ENCODE measurements at regions of chr9 and their contacts with region 1.

Region 1: DNA sequence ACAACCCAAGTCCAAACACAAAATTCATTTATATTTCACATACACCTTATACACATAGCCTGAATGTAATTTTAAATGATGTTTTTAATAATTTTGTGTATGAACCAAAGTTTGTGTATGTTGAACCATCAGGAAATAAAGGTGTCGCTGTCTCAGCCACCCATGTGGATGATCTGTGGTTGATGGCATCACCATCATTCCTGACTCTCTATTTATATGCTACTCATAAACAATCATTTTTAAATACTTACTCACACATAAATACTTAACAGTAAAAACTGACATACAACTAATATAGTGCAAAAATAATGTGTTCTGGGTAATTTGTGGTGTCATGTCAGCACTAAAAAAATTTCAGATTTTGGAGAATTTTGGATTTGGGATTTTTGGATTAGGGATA is 38.4 kb downstream of the SMC5 start:
- DNase-seq: no peak
- ATAC-seq: no peak
- H3K4me3 ChIP-seq: no peak overlapping the region
- H3K27ac ChIP-seq: no peak overlapping the region
- H3K4me1 ChIP-seq: no peaks in the 10 kb centered on the region
- H3K27me3 ChIP-seq: no peaks in the 10 kb centered on the region
- CTCF ChIP-seq: no peak
- EP300 ChIP-seq: no peak
- POLR2A ChIP-seq: no peak
- RAD21 ChIP-seq: no peak

Region 2: DNA sequence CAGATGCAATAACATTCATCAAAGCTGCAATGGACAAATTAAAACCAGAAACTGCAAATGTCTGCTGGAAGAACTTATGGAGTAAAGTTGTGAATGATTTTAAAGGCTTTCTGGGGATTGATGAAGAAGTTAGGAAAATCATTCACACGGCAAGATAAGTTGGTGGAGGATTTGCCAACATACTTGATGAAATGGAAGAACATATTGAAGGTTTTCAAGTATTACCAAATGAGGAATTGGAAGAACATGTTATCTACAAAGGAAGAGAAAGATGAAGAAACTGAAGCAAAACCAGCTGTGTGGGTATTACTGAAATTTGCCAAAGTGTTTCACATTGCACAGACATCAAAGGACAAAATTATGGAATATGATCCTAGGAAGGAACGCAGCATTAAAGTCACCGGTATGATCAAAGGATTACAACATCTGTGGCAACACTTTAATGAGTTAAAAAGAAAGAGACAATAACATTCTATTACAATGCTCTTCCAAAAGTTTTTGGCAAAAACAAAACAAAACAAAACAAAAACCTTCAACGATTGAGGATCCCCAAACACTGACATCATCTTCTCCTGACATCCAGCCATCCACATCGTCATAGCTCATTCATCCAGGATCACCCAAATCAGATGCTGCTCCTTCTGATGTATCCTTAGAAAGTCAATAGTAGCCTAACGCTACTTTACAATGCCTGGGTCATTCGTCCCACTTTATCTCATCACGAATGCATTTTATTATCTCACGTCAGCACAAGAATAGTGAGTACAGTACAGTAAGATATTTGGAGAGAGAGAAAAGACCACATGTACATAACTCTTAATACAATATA is 99.7 kb before region 1 on chr9:
- CTCF ChIA-PET with region 1: no interaction called
- POLR2A ChIA-PET with region 1: no interaction called
- RAD21 ChIA-PET with region 1: no interaction called
- SMC1A ChIA-PET with region 1: no interaction called
- in situ Hi-C with region 1: no loop called
- intact Hi-C with region 1: no loop called
- DNase-seq: no peak
- ATAC-seq: no peak
- H3K4me3 ChIP-seq: no peak overlapping the region
- H3K27ac ChIP-seq: no peak overlapping the region
- H3K4me1 ChIP-seq: no peaks in the 10 kb centered on the region
- H3K27me3 ChIP-seq: no peaks in the 10 kb centered on the region
- CTCF ChIP-seq: no peak
- EP300 ChIP-seq: no peak
- POLR2A ChIP-seq: no peak
- RAD21 ChIP-seq: no peak

Region 3: DNA sequence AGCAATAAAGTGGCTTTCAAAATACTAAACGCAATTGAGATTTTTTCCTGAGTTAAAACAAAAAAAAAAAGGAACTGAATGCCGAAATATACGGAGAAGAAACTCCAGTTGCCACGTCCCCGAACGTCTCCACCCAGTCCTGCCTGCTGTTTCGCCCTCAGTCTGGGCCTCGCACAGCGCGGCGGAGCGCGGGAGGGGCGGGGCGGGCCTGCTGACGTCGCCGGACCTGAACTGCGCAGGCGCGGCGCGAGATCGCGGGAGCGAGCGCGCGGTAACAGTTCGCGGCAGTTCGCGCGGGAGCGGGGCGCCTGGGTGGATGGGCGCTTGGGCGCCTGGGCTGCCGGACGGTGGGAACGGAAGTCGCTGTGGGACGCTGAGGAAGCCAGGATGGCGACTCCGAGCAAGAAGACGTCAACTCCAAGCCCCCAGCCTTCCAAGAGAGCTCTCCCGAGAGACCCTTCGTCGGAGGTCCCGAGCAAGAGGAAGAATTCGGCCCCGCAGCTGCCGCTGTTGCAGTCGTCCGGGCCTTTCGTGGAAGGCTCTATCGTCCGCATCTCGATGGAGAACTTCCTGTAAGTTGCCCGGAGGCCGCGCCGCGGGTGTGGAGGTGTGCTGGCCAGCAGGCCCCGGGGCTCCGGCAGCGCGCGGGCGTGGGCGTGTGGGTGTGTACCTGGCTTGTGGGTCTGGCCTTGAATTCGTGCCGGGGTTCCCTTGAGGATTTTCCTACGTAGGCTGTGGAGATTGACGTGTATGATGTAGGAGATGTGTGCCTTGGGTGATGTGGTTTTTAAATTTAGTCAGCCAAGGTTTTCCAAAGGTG is 38.2 kb before region 1 on chr9 and contains the start of gene SMC5:
- CTCF ChIA-PET with region 1: no interaction called
- POLR2A ChIA-PET with region 1: no interaction called
- RAD21 ChIA-PET with region 1: no interaction called
- SMC1A ChIA-PET with region 1: no interaction called
- in situ Hi-C with region 1: no loop called
- intact Hi-C with region 1: loop called (anchors 5 kb)
- DNase-seq: peak; percentile 80
- ATAC-seq: peak; percentile 84
- H3K4me3 ChIP-seq: peak within 1 kb of the TSS; percentile 85
- H3K27ac ChIP-seq: peak within 1 kb of the TSS; percentile 93
- H3K4me1 ChIP-seq: peaks cover 14% of the 10 kb centered on the region
- H3K27me3 ChIP-seq: no peaks in the 10 kb centered on the region
- CTCF ChIP-seq: no peak
- EP300 ChIP-seq: peak; percentile 43 to 76; a peak in 2 of 4 replicates
- POLR2A ChIP-seq: peak; percentile 99
- RAD21 ChIP-seq: no peak
- polyA plus RNA-seq, gene SMC5: 6.5 to 7.2 TPM

Region 4: GRCh38 chr9:70315389-70315788 is 18.2 kb after region 1 on chr9:
- CTCF ChIA-PET with region 1: interaction called, 3 read pairs
- POLR2A ChIA-PET with region 1: interaction called, 11 read pairs
- RAD21 ChIA-PET with region 1: interaction called, 3 read pairs
- SMC1A ChIA-PET with region 1: no interaction called
- in situ Hi-C with region 1: no loop called
- intact Hi-C with region 1: no loop called
- DNase-seq: no peak
- ATAC-seq: no peak
- H3K4me3 ChIP-seq: no peak overlapping the region
- H3K27ac ChIP-seq: no peak overlapping the region
- H3K4me1 ChIP-seq: no peaks in the 10 kb centered on the region
- H3K27me3 ChIP-seq: no peaks in the 10 kb centered on the region
- CTCF ChIP-seq: no peak
- EP300 ChIP-seq: no peak
- POLR2A ChIP-seq: no peak
- RAD21 ChIP-seq: no peak